ENCODE measurements at regions of chr10 and their contacts with region 1.

Region 1: GRCh38 chr10:99711129-99711719 is 20.7 kb downstream of the COX15 start:
- DNase-seq: peak; percentile 14
- H3K4me3 Mint-ChIP-seq: no peak overlapping the region
- H3K27ac Mint-ChIP-seq: no peak overlapping the region
- H3K4me1 Mint-ChIP-seq: no peaks in the 10 kb centered on the region
- H3K27me3 Mint-ChIP-seq: no peaks in the 10 kb centered on the region
- CTCF ChIP-seq: no peak

Region 2: DNA sequence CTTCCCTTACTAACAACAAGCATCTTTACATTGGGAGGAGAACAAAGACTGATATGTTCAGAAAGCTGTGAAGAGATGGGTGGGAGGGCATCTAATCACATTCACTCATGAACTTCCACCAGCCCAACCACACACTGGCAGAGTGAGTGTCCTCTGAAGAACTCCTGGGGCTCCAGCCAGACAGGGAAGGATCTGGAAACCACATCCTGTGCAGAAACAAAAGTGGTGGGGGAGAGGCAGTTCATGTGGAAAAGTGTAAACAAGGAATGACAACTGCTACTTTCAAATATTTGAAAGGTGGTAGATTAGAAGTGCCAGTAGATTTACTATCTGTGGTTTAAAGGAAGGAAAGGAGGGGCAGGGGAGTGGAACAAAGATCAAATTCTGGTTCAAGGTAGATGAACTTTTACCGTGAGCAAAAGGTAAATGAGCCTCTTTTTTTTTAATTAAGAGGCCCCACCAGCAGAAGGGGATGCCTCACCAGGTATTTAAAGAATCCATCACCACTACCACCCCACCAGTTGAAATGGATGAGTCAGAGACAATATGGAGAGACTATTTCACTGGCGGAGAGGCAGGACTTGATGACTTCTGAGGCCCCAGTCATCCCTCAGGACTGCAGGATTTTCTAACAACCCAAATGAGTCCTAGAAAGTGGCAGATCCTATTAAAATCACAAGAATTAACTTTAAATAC is 315.3 kb before region 1 on chr10:
- CTCF ChIA-PET with region 1: no interaction called
- intact Hi-C with region 1: loop called (anchors 2 kb)
- DNase-seq: no peak
- H3K4me3 Mint-ChIP-seq: peak overlapping the region; percentile 12
- H3K27ac Mint-ChIP-seq: peak overlapping the region; percentile 54
- H3K4me1 Mint-ChIP-seq: peaks cover 11% of the 10 kb centered on the region
- H3K27me3 Mint-ChIP-seq: no peaks in the 10 kb centered on the region
- CTCF ChIP-seq: no peak

Region 3: DNA sequence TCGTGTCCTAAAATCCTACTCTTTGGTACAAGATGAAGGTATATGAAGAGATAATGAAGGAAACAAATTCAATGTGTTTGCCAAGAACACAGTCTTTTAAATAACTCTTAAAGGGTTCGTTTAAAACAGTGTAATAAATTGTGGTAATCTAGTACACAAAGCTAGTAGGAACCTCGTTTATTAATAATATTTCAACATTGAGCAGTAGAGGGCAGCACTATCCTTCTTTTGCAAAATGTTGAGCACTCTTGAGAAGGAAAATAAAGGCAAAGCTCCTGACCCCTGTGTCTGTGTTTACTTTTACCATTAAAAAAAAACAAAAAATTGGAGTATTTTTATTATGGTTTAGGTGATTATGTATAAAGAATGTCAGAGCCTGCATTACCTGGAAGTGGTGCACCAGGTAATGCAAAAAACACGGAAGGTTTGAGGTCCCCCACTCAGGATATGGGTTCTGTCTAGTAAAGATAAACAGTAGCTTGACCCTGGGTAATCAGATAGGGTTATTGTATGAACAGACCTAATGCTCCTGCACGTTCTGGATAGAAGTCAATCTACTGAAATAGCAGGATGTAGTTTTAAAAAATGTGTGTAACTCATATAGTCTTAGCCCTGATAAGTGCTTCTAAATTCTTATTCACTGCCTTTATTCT is 275.1 kb before region 1 on chr10:
- CTCF ChIA-PET with region 1: no interaction called
- intact Hi-C with region 1: loop called (anchors 5 kb)
- DNase-seq: peak; percentile 6
- H3K4me3 Mint-ChIP-seq: no peak overlapping the region
- H3K27ac Mint-ChIP-seq: no peak overlapping the region
- H3K4me1 Mint-ChIP-seq: no peaks in the 10 kb centered on the region
- H3K27me3 Mint-ChIP-seq: no peaks in the 10 kb centered on the region
- CTCF ChIP-seq: peak; percentile 26

Region 4: DNA sequence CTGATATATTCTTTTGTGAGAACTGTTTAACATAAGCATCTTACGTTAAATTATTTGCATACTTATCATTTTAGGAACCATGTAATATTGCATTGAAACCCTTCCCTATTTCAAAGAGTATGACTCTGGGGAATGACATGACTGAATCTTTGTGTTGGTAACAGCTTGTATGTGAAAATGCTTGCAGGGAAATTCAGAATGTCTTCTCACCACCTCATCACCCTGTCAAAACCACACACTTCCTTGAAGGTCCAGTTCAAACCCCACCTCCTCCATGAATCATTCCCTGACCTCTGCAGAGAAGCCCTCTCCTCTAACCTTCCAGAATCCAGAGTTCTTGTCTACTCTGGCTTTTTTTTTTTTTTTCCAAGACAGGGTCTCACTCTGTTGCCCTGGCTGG is 204.8 kb before region 1 on chr10:
- CTCF ChIA-PET with region 1: no interaction called
- intact Hi-C with region 1: no loop called
- DNase-seq: no peak
- H3K4me3 Mint-ChIP-seq: no peak overlapping the region
- H3K27ac Mint-ChIP-seq: no peak overlapping the region
- H3K4me1 Mint-ChIP-seq: no peaks in the 10 kb centered on the region
- H3K27me3 Mint-ChIP-seq: peaks cover 58% of the 10 kb centered on the region
- CTCF ChIP-seq: no peak

Region 5: DNA sequence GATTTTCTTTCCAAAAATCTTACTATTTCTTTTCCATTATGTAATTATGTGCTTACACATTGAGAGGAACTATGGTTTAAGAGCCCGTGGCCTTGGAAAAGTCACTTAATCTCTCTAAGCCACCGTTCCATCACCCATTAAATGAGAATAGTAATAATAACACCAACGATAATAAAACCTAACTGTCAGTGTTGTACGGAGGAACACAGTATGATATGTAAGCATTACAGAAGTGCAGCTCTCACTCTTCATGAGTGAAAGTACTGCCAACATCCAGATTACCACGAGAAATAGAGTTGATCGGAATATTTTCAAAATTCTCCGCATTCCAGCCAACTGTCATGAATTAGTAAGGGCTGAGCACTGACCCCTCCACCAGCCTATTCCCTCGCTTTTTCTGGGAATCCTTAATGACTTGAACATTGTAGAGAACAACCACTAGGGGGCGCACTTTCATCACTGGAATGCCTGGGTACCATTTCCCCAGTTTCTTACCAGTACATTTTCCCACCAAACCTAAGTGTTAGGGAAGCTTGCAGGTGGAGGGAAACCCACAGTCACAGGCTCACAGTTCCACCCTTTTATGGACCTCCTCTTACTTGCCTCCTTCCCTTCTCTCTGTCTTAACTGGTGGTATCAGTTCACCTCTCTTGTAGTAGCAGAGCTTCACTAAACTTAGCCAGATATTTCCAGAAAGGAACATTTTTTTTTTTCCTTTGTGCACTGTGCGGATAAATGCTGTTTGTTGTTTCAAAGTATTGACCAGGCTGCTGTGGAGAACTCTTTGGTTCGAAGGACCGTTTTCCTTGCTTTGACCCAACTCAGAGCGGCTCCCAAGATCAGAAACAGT is 150.7 kb before region 1 on chr10:
- CTCF ChIA-PET with region 1: no interaction called
- intact Hi-C with region 1: loop called (anchors 1 kb)
- DNase-seq: peak; percentile 56
- H3K4me3 Mint-ChIP-seq: no peak overlapping the region
- H3K27ac Mint-ChIP-seq: no peak overlapping the region
- H3K4me1 Mint-ChIP-seq: no peaks in the 10 kb centered on the region
- H3K27me3 Mint-ChIP-seq: peaks cover 14% of the 10 kb centered on the region
- CTCF ChIP-seq: peak; percentile 69

Region 6: GRCh38 chr10:99630439-99630838 is 80.8 kb before region 1 on chr10:
- CTCF ChIA-PET with region 1: interaction called, 3 read pairs
- intact Hi-C with region 1: loop called (anchors 1 kb)
- DNase-seq: peak; percentile 24
- H3K4me3 Mint-ChIP-seq: no peak overlapping the region
- H3K27ac Mint-ChIP-seq: no peak overlapping the region
- H3K4me1 Mint-ChIP-seq: no peaks in the 10 kb centered on the region
- H3K27me3 Mint-ChIP-seq: peaks cover 13% of the 10 kb centered on the region
- CTCF ChIP-seq: no peak

Region 7: GRCh38 chr10:99667108-99667751 is 44.0 kb before region 1 on chr10:
- CTCF ChIA-PET with region 1: no interaction called
- intact Hi-C with region 1: no loop called
- DNase-seq: no peak
- H3K4me3 Mint-ChIP-seq: no peak overlapping the region
- H3K27ac Mint-ChIP-seq: no peak overlapping the region
- H3K4me1 Mint-ChIP-seq: peaks cover 16% of the 10 kb centered on the region
- H3K27me3 Mint-ChIP-seq: no peaks in the 10 kb centered on the region
- CTCF ChIP-seq: no peak